ENCODE measurements at regions of chr1 and their contacts with region 1.

Region 1: GRCh38 chr1:61157468-61157987 is 75.2 kb downstream of the NFIA start:
- H3K4me3 ChIP-seq: no peak overlapping the region
- H3K27ac ChIP-seq: no peak overlapping the region
- H3K4me1 ChIP-seq: peaks cover 7% of the 10 kb centered on the region
- CTCF ChIP-seq: no peak

Region 2: GRCh38 chr1:61087571-61087970 is 70.0 kb before region 1 on chr1:
- CTCF ChIA-PET with region 1: no interaction called
- POLR2A ChIA-PET with region 1: no interaction called
- H3K4me3 ChIP-seq: no peak overlapping the region
- H3K27ac ChIP-seq: no peak overlapping the region
- H3K4me1 ChIP-seq: peaks cover 18% of the 10 kb centered on the region
- CTCF ChIP-seq: no peak

Region 3: DNA sequence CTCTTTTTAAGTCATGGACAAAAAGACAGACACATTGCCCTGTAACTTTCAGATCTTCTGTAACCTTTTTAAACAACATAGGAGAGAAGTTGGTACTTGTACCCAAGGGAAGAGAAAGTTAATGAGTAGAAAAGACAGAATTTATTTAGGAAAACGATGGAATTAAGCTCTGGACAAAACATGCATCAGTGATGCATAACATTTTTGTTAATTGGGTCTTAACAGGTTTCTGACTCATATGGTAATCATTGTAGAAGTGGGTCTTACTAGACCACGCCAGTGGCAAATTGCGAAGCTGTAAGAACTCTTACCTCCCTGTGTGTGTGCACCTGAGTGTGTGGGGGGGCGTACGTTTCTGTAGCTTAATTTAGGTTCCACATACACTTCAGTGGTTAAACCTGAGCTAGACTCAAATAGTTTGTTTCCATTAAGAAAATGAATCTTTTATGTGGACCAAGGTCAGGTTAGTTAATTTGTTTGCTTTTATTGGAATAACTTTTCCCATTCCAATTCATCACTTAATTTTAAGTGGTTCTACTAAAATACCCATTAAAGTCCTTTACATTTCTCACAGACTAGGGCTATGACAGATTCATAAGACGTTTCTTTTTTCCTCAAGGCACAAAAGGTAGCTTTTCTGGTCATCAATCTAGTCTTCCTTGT is 27.1 kb before region 1 on chr1:
- CTCF ChIA-PET with region 1: interaction called, 12 read pairs
- POLR2A ChIA-PET with region 1: no interaction called
- H3K4me3 ChIP-seq: no peak overlapping the region
- H3K27ac ChIP-seq: no peak overlapping the region
- H3K4me1 ChIP-seq: peaks cover 22% of the 10 kb centered on the region
- CTCF ChIP-seq: no peak

Region 4: GRCh38 chr1:62263006-62263813 is 1105.7 kb after region 1 on chr1:
- CTCF ChIA-PET with region 1: no interaction called
- POLR2A ChIA-PET with region 1: no interaction called
- H3K4me3 ChIP-seq: no peak overlapping the region
- H3K27ac ChIP-seq: no peak overlapping the region
- H3K4me1 ChIP-seq: no peaks in the 10 kb centered on the region
- CTCF ChIP-seq: no peak

Measured in HEK293 (cell line).